PC-9 (cell line): ENCODE measurements at regions of chr1 and their contacts with region 1.

Region 1: DNA sequence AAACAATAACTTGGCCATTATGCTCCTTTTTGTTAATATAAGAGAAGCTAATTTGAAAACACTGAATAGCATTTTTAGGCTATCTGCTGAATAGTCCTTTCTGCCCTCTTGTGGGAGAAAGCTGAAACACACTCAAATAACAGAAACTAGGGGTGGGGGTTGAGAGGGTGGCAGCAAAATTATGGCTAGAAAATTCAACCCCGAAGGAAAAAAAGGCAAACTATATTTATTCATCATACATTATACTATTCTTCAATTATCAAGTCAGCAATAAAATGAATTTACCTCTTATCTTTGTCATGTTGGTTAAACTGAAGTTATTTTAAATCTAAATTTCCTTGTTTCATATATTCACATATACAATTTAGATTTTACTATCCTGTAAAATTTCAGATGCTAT is 255.9 kb downstream of the FAF1 start:
- DNase-seq: peak; percentile 11 to 39
- H3K4me3 ChIP-seq: no peak overlapping the region
- H3K27ac ChIP-seq: no peak overlapping the region
- H3K4me1 ChIP-seq: no peaks in the 10 kb centered on the region
- H3K27me3 ChIP-seq: no peaks in the 10 kb centered on the region
- CTCF ChIP-seq: peak; percentile 85

Region 2: DNA sequence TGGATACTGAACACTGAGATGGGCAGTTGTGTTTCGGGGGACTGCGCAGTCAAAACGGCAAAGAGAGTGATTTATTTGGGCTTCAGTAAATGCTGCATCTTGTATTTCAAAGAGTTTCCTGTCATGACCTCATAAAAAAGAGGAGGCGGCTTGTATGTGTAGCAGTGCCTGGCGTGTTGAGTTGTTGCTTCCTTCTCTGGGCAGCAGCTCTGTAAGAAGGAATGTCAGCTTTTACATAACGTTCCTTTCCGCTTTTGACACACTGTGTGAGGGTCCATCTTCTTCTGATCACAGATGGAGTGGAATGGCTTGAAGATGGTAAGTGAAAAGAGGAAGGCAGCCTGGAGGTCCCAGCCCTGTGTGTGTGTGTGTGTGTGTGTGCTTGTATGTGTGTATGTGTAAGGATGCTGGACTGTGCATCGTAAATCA is 594.5 kb before region 1 on chr1:
- CTCF ChIA-PET with region 1: no interaction called
- POLR2A ChIA-PET with region 1: no interaction called
- intact Hi-C with region 1: no loop called
- DNase-seq: no peak
- H3K4me3 ChIP-seq: no peak overlapping the region
- H3K27ac ChIP-seq: no peak overlapping the region
- H3K4me1 ChIP-seq: no peaks in the 10 kb centered on the region
- H3K27me3 ChIP-seq: peaks cover 74% of the 10 kb centered on the region
- CTCF ChIP-seq: no peak

Region 3: DNA sequence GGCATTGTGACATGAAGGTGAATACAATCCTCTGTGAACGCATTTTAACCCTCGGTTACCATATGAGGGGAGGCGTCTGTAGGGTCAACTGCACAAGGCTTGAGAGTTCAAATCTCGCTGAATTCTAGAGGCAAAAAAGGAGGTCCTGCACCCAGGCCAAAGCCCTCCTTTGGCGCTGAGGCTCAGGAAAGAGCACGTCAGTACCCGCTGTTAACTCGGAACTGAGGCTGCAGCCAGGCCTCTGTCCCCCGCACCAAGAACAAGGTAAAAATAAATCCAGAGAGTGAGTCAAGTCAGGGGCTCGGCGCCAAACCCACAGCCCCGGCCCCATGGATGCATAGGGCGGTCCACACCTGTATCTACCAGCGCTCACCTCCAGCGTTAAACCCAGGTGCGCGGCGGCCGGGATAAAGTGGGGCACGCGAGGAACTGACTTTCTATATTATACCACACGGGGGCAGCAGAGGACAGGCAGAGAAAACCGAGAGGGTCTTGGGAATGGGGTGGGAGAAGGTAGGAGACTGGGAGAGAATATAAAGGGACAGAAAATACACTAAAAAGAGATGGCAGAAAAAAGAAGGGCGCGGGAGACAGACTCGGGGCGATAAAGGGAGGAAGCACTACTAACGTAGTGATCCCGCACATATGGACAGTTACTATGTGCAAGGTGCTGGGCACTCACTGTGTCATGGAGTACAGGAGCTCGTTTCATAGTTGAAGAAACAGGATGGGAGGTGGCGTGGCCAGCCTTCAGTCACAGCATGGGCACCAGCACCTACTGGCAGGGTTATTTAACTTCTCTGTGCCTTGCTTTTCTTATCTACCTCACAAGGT is 335.7 kb before region 1 on chr1:
- CTCF ChIA-PET with region 1: no interaction called
- POLR2A ChIA-PET with region 1: no interaction called
- intact Hi-C with region 1: loop called (anchors 10 kb)
- DNase-seq: peak in 1 of 2 experiments; percentile 23
- H3K4me3 ChIP-seq: no peak overlapping the region
- H3K27ac ChIP-seq: no peak overlapping the region
- H3K4me1 ChIP-seq: no peaks in the 10 kb centered on the region
- H3K27me3 ChIP-seq: peaks cover 6% of the 10 kb centered on the region; the same call in 1 of the 2 replicates
- CTCF ChIP-seq: peak; percentile 83

Region 4: DNA sequence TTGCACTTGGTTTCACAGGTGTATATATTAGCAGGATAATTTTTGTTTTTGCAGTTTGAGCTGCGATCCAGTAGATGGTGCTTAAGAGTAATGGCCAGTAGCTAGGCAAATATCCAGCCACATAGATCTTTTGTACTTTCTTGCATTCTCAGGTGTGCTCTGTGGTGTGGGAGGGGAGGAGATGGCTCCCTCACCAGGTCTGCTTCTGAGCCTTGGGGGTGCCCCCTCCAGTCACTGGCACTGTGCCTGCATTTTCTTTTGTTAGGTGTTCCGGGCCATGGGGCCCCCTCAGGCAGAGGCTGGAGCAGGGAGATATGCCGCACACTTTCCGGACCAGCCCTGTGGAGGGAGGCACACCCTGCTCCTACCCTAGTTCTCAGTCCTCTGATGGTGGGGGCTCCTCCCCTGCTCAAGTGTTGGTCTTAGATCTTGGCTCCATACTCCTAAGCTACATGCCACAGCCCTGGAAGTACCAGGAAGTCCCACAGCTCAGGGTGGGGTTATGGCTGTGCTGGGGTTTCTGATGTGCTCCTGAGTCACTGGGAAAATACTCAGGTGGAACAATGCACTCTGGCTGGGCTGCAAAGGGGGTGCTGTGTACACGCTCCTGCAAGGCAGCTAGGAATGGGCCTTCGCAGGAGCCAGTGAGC is 83.3 kb before region 1 on chr1:
- CTCF ChIA-PET with region 1: interaction called, 23 read pairs
- POLR2A ChIA-PET with region 1: interaction called, 3 read pairs
- intact Hi-C with region 1: loop called (anchors 1 kb)
- DNase-seq: peak; percentile 83 to 95
- H3K4me3 ChIP-seq: no peak overlapping the region
- H3K27ac ChIP-seq: peak overlapping the region; percentile 62
- H3K4me1 ChIP-seq: no peaks in the 10 kb centered on the region
- H3K27me3 ChIP-seq: no peaks in the 10 kb centered on the region
- CTCF ChIP-seq: peak; percentile 67

Region 5: GRCh38 chr1:50658459-50659076 is 45.6 kb before region 1 on chr1:
- CTCF ChIA-PET with region 1: interaction called, 5 read pairs
- POLR2A ChIA-PET with region 1: no interaction called
- intact Hi-C with region 1: loop called (anchors 1 kb)
- DNase-seq: no peak
- H3K4me3 ChIP-seq: no peak overlapping the region
- H3K27ac ChIP-seq: no peak overlapping the region
- H3K4me1 ChIP-seq: no peaks in the 10 kb centered on the region
- H3K27me3 ChIP-seq: no peaks in the 10 kb centered on the region
- CTCF ChIP-seq: no peak

Region 6: GRCh38 chr1:50684185-50684584 is 19.9 kb before region 1 on chr1:
- CTCF ChIA-PET with region 1: interaction called, 18 read pairs
- POLR2A ChIA-PET with region 1: no interaction called
- intact Hi-C with region 1: no loop called
- DNase-seq: no peak
- H3K4me3 ChIP-seq: no peak overlapping the region
- H3K27ac ChIP-seq: no peak overlapping the region
- H3K4me1 ChIP-seq: no peaks in the 10 kb centered on the region
- H3K27me3 ChIP-seq: no peaks in the 10 kb centered on the region
- CTCF ChIP-seq: 0 out of 2 replicates have a peak, but pooled peaks have one; percentile 13

Region 7: DNA sequence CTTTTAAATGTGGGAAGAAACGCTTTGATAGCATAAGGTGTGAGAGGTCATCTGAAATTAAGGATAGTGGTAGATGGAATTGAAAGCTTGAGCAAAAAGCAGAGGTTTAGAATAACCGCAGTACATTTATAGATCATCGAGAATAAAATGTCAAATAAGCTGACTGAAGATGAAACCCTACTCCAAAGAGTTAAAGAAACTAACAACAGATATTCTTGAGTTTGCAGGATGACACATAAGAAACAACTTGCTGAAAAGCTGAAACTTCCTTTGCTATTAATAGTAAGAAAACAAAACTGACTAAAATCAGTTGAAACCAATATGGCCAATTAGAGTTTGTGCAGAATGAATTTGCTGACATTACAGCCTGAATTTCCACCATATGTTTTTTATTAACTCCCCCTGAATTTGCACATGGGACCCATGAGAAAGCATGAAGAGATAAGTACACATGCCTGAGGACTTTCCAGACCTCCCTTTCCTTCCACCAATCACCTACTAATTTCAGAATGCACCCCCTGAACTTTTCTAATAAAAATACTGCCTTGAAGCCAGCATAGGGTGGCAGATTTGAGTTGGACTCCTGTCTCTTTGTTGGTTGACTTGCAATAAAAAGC is 396.2 kb after region 1 on chr1:
- CTCF ChIA-PET with region 1: no interaction called
- POLR2A ChIA-PET with region 1: no interaction called
- intact Hi-C with region 1: no loop called
- DNase-seq: no peak
- H3K4me3 ChIP-seq: no peak overlapping the region
- H3K27ac ChIP-seq: no peak overlapping the region
- H3K4me1 ChIP-seq: no peaks in the 10 kb centered on the region
- H3K27me3 ChIP-seq: no peaks in the 10 kb centered on the region
- CTCF ChIP-seq: no peak